ENCODE measurements at regions of chr6 and their contacts with region 1.

Region 1: GRCh38 chr6:14612016-14612980 is 494.7 kb downstream of the CD83 start:
- DNase-seq: no peak
- H3K4me3 ChIP-seq: no peak overlapping the region
- H3K4me3 Mint-ChIP-seq: no peak overlapping the region
- H3K27ac Mint-ChIP-seq: no peak overlapping the region
- H3K4me1 ChIP-seq: no peaks in the 10 kb centered on the region
- H3K4me1 Mint-ChIP-seq: no peaks in the 10 kb centered on the region
- H3K27me3 ChIP-seq: no peaks in the 10 kb centered on the region
- H3K27me3 Mint-ChIP-seq: peaks cover 2% of the 10 kb centered on the region
- CTCF ChIP-seq: no peak

Region 2: GRCh38 chr6:14524319-14524718 is 88.0 kb before region 1 on chr6:
- CTCF ChIA-PET with region 1: no interaction called
- POLR2A ChIA-PET with region 1: interaction called, 10 read pairs
- intact Hi-C with region 1: no loop called
- DNase-seq: no peak
- H3K4me3 ChIP-seq: no peak overlapping the region
- H3K4me3 Mint-ChIP-seq: no peak overlapping the region
- H3K27ac Mint-ChIP-seq: no peak overlapping the region
- H3K4me1 ChIP-seq: no peaks in the 10 kb centered on the region
- H3K4me1 Mint-ChIP-seq: no peaks in the 10 kb centered on the region
- H3K27me3 ChIP-seq: no peaks in the 10 kb centered on the region
- H3K27me3 Mint-ChIP-seq: no peaks in the 10 kb centered on the region
- CTCF ChIP-seq: no peak

Region 3: DNA sequence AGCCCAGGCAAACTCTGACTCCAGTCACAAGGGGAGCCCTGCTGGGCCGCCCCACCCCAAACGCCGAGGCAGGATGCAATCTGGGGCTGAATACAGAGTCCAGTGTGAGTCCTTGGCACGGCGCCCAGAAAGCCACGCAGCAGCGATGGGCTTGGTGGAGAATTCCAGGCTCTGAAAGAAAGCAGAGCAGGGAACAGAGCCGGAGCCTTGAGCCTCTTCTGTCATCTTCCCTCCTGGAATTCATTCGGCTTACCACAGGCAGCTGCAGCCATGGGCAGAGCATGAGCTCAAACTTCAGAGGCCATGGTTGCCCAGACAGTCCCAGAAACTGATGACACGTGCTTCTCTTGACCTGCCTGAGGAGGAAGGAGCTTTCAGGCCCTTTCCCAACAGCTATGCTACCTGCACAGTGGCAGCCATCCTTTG is 192.5 kb after region 1 on chr6:
- CTCF ChIA-PET with region 1: no interaction called
- POLR2A ChIA-PET with region 1: no interaction called
- intact Hi-C with region 1: no loop called
- DNase-seq: no peak
- H3K4me3 ChIP-seq: no peak overlapping the region
- H3K4me3 Mint-ChIP-seq: no peak overlapping the region
- H3K27ac Mint-ChIP-seq: no peak overlapping the region
- H3K4me1 ChIP-seq: no peaks in the 10 kb centered on the region
- H3K4me1 Mint-ChIP-seq: no peaks in the 10 kb centered on the region
- H3K27me3 ChIP-seq: no peaks in the 10 kb centered on the region
- H3K27me3 Mint-ChIP-seq: no peaks in the 10 kb centered on the region
- CTCF ChIP-seq: no peak